CD8-positive, alpha-beta T cell (primary cell): ENCODE measurements at regions of chr1 and their contacts with region 1.

Region 1: DNA sequence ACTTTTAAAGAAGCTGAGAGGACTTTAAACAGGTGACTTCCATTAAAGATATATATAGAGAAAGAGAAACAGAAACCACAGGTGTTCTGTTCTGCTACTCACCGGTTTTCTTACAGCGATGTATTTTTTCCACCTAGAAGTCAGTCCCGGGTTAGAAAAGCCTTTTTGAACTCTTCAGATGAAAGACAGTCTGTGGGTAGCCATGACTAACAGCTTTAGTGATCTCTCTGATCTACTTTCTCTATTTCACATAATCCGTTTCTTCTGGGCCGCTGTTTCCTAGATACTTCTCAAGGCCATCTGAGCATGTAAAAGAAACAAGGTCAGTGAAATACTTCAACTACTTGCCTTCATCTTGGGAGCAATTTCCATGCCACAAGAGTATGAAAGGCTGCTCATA is 25.1 kb downstream of the WDR64 start:
- DNase-seq: peak in 6 of 9 experiments; percentile 9 to 81 (median 24)
- ATAC-seq: peak; percentile 92
- H3K4me3 ChIP-seq: peak overlapping the region; percentile 3 to 28
- H3K4me3 Mint-ChIP-seq: peak overlapping the region; percentile 70
- H3K27ac ChIP-seq: peak overlapping the region; percentile 1 to 63
- H3K27ac Mint-ChIP-seq: peak overlapping the region; percentile 87
- H3K4me1 ChIP-seq: peaks cover 25% of the 10 kb centered on the region
- H3K4me1 Mint-ChIP-seq: peaks cover 21% of the 10 kb centered on the region
- H3K27me3 ChIP-seq: no peaks in the 10 kb centered on the region
- H3K27me3 Mint-ChIP-seq: no peaks in the 10 kb centered on the region
- CTCF ChIP-seq: no peak

Region 2: DNA sequence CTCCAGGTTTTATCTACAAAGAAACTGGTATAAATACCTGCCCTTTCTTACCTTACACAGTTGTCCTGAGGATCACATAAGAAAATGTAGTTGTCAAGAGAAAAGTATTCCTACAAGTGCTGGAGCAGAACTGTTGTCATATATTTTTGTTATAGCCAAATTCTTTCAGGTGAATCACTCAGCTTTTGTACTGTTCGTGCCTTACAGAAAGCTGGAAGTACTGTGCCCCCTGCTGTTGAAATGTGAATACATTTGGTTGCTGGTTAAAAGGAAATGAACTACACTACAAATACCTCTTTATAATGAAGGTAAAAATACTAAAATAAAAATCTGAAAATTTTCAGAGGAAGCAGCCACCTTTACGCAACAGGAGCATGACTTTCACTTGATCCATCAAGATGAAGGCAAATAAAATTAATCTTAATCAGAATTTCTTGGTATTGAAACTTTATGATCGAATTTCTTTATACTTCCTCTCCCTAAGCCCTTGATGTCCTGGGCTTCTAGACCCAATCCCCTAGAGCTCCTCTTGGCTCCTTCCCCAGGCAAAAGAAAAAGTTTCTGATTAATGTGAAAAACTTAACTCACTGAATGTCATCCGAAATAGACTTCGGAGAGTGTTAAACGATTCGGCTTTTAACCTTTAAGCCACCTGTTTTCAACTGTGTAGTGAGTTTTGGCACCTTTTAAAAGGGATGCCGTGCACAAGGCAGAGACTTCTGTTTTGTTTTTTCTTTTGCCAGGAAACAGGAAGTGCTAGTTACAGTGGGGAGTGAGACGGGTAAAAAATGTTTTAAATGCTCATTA is 49.5 kb before region 1 on chr1:
- CTCF ChIA-PET with region 1: no interaction called
- POLR2A ChIA-PET with region 1: no interaction called
- intact Hi-C with region 1: loop called in 1 of 2 experiments (anchors 2 kb)
- DNase-seq: peak in 6 of 9 experiments; percentile 13 to 81 (median 43)
- ATAC-seq: peak; percentile 77
- H3K4me3 ChIP-seq: peak overlapping the region; percentile 25 to 29
- H3K4me3 Mint-ChIP-seq: peak overlapping the region; percentile 77
- H3K27ac ChIP-seq: peak overlapping the region; percentile 38 to 45
- H3K27ac Mint-ChIP-seq: peak overlapping the region; percentile 92
- H3K4me1 ChIP-seq: peaks cover 4% of the 10 kb centered on the region
- H3K4me1 Mint-ChIP-seq: peaks cover 24% of the 10 kb centered on the region
- H3K27me3 ChIP-seq: no peaks in the 10 kb centered on the region
- H3K27me3 Mint-ChIP-seq: no peaks in the 10 kb centered on the region
- CTCF ChIP-seq: peak; percentile 79

Region 3: GRCh38 chr1:241706954-241707365 is 29.8 kb after region 1 on chr1:
- CTCF ChIA-PET with region 1: no interaction called
- POLR2A ChIA-PET with region 1: interaction called, 7 read pairs
- intact Hi-C with region 1: loop called in 1 of 2 experiments (anchors 1 kb)
- DNase-seq: peak; percentile 9 to 83 (median 58)
- ATAC-seq: peak; percentile 92
- H3K4me3 ChIP-seq: no peak overlapping the region
- H3K4me3 Mint-ChIP-seq: peak overlapping the region; percentile 54
- H3K27ac ChIP-seq: no peak overlapping the region
- H3K27ac Mint-ChIP-seq: peak overlapping the region; percentile 53
- H3K4me1 ChIP-seq: peaks cover 21% of the 10 kb centered on the region
- H3K4me1 Mint-ChIP-seq: peaks cover 35% of the 10 kb centered on the region
- H3K27me3 ChIP-seq: no peaks in the 10 kb centered on the region
- H3K27me3 Mint-ChIP-seq: no peaks in the 10 kb centered on the region
- CTCF ChIP-seq: no peak

Region 4: GRCh38 chr1:241716915-241717656 is 39.9 kb after region 1 on chr1:
- CTCF ChIA-PET with region 1: no interaction called
- POLR2A ChIA-PET with region 1: interaction called, 4 read pairs
- intact Hi-C with region 1: loop called (anchors 2 to 5 kb)
- DNase-seq: peak in 6 of 9 experiments; percentile 14 to 63 (median 42)
- ATAC-seq: peak; percentile 98
- H3K4me3 ChIP-seq: no peak overlapping the region
- H3K4me3 Mint-ChIP-seq: no peak overlapping the region
- H3K27ac ChIP-seq: no peak overlapping the region
- H3K27ac Mint-ChIP-seq: no peak overlapping the region
- H3K4me1 ChIP-seq: peaks cover 15% of the 10 kb centered on the region
- H3K4me1 Mint-ChIP-seq: peaks cover 22% of the 10 kb centered on the region
- H3K27me3 ChIP-seq: no peaks in the 10 kb centered on the region
- H3K27me3 Mint-ChIP-seq: no peaks in the 10 kb centered on the region
- CTCF ChIP-seq: no peak

Region 5: DNA sequence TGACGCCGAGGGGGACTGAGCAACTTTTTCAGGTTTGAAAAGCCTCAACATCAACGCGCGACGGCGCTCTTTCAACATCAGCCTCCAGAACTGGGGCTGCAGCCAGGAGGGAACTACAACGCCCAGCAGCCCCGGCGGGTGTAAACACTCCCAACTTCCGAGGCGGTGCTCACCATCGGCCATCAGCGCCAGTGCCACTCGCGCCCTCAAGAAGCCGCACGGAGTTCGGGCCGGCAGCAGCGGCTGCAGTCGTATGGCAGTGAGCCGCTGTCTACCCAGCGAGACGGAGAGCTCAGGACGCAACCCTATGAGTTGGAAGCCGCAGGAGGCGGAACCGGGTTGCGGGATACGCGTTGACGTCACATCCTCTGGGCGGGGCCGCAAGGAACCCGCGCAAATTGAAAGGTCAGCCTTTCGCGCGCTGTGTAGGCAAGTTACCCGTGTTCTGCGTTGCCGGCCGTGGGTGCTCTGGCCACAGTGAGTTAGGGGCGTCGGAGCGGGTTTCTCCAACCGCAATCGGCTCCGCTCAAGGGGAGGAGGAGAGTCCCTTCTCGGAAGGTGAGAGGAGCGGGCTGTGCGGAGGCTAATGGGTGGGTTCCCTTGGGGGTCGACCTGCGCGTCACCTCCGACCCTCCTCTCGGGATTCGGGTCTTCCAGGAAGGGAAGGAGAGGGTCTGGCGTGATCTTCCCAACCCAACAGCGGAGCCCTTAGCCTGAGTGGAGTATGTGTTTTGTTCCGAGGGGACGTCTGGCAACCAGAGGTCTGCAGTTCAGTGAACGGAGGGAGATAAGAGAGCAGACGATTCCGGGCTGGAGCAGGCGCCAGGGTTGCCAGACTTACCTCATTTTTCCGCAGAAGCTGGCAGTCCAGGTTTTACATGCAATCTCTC is 170.8 kb after region 1 on chr1 and contains the start of gene EXO1:
- CTCF ChIA-PET with region 1: no interaction called
- POLR2A ChIA-PET with region 1: no interaction called
- intact Hi-C with region 1: loop called (anchors 1 to 5 kb)
- DNase-seq: peak; percentile 78 to 95 (median 88)
- ATAC-seq: peak; percentile 97
- H3K4me3 ChIP-seq: peak within 1 kb of the TSS; percentile 94 to 100
- H3K4me3 Mint-ChIP-seq: peak within 1 kb of the TSS; percentile 100
- H3K27ac ChIP-seq: peak within 1 kb of the TSS; percentile 94 to 98
- H3K27ac Mint-ChIP-seq: peak within 1 kb of the TSS; percentile 99
- H3K4me1 ChIP-seq: peaks cover 9% of the 10 kb centered on the region
- H3K4me1 Mint-ChIP-seq: peaks cover 18% of the 10 kb centered on the region
- H3K27me3 ChIP-seq: no peaks in the 10 kb centered on the region
- H3K27me3 Mint-ChIP-seq: no peaks in the 10 kb centered on the region
- CTCF ChIP-seq: peak; percentile 29
- total RNA-seq, gene EXO1: 1.5 to 2.4 TPM